Dorsolateral prefrontal cortex (tissue), 120 donors: ENCODE measurements at regions of chr17 and their contacts with region 1.

Region 1: GRCh38 chr17:8954339-8954738 is 11.2 kb downstream of the PIK3R5 start:
- DNase-seq: peak in 1 of 10 donors; percentile 39
- H3K4me3 ChIP-seq: no peak overlapping the region
- H3K27ac ChIP-seq: peak overlapping the region in 6 of 59 donors; percentile 15 to 61 (median 32)
- H3K27me3 ChIP-seq: peaks cover 0 to 22% (median 0%) of the 10 kb centered on the region in 45 donors
- CTCF ChIP-seq: no peak

Region 2: DNA sequence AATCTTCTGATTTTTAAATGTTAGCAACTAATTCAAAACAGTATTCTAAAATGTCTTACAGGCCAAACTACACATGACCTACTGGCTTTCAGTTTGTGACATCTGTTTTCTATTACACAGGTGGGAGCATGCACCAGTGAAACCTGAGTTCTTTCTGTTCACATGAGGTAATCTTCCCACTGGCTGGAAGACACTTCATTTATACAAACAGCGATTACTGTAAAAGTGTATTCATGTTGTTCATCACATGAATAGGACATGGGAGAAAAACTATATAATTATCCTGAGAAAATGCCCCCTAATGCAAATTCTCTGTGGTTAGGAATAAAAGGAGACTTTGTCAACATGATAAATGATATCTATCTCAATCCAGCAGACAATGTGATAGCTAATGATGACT is 22.3 kb after region 1 on chr17:
- intact Hi-C with region 1: no loop called
- DNase-seq: no peak
- H3K4me3 ChIP-seq: no peak overlapping the region
- H3K27ac ChIP-seq: no peak overlapping the region
- H3K27me3 ChIP-seq: peaks cover 0 to 6% (median 0%) of the 10 kb centered on the region in 45 donors
- CTCF ChIP-seq: no peak

Region 3: DNA sequence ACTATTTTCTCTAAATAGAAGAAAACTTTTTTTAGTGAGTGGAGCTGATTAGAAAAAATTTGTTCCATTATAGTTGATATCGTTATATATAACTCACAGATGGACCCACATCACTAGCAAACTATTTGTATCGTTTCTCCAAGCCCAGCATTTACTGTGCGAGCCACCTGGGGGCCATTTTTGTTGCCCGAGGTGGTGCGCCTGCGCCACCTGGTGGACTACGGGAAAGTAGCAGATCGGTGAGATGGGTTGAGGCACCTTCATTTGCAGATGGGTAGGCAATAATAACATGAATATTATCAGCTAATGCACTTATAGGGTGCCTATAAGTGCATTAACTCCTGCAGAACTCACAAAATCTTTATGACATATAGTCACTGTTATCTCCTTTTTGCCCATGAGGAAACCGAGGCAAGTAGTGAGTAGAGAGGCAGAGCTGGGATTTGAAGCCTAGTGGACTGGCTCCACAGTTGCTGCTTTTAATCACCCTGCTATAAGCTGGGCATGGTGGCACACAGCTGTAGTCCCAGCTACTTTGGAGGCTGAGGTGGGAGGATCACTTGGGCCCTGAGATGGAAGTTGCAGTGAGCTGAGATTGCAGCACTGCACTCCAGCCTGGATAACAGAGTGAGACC is 43.8 kb after region 1 on chr17:
- intact Hi-C with region 1: loop called in 1 of 2 experiments (anchors 10 kb)
- DNase-seq: peak in 1 of 10 donors; percentile 27
- H3K4me3 ChIP-seq: no peak overlapping the region
- H3K27ac ChIP-seq: no peak overlapping the region
- H3K27me3 ChIP-seq: peaks cover 0 to 37% (median 6%) of the 10 kb centered on the region in 45 donors
- CTCF ChIP-seq: peak; percentile 31 to 80 (median 69)